H1 (cell line): ENCODE measurements at regions of chr16 and their contacts with region 1.

Region 1: DNA sequence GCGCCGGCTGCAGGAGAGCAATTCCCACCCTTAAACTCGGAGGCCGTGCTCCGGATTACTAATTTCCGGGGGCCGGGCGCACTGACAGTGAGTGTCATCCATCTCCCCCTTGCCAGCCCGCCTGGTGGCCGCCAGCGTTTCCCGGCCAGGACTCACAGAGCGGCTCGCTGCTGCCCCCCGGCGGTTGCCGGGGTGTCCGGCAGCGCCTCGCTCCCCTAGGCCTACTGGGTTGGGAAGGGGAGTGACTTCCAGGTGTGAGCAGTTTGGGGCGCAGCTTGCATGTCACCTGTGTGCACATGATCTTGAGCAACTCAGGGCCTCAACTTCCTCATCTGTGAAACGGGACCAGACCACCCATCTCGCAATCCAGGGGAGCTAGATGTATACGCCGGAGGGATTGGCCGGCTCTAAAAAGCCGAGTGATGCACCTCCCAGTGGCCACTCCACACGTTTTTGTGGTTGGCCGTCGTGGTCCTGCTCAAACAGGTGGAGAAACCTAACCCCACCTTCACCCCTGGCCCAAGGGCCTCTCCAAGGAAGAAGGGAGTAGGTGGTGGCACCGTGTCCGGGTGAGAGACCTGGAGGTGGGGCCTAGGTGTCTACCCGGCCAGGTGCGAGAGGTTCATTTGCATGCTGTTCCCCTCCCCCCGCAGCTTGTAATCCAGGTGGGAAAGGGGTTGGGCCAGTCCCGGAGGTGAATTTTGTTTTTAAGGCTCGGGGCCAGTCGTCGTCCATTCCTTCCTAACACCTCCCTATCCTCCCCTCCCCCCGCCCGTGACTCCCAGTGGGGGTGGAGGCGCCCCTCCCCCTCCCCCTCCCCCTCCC is 2.4 kb upstream of the GSE1 start:
- DNase-seq: peak; percentile 88 to 96
- H3K4me3 ChIP-seq: peak overlapping the region; percentile 29 to 92 (median 52); a peak in 6 of 8 replicates
- H3K27ac ChIP-seq: peak overlapping the region; percentile 70; the same call in 1 of the 2 replicates
- H3K4me1 ChIP-seq: peaks cover 10 to 46% (median 41%) of the 10 kb centered on the region in 4 experiments
- H3K27me3 ChIP-seq: peaks cover 0 to 9% (median 4%) of the 10 kb centered on the region in 4 experiments; a peak in 2 of 7 replicates
- CTCF ChIP-seq: peak in 2 of 3 experiments; percentile 90 to 99; a peak in 3 of 4 replicates
- EP300 ChIP-seq: peak in 1 of 2 experiments; percentile 83; a peak in 1 of 3 replicates
- POLR2A ChIP-seq: no peak
- RAD21 ChIP-seq: peak; percentile 97 to 98

Region 2: GRCh38 chr16:85461814-85462713 is 148.7 kb before region 1 on chr16:
- CTCF ChIA-PET with region 1: interaction called, 16 read pairs
- POLR2A ChIA-PET with region 1: interaction called, 3 read pairs
- DNase-seq: peak in 1 of 2 experiments; percentile 76
- H3K4me3 ChIP-seq: peak overlapping the region; percentile 4 to 57 (median 46)
- H3K27ac ChIP-seq: no peak overlapping the region
- H3K4me1 ChIP-seq: peaks cover 7 to 33% (median 25%) of the 10 kb centered on the region in 4 experiments
- H3K27me3 ChIP-seq: peaks cover 5 to 49% (median 36%) of the 10 kb centered on the region in 4 experiments; a peak in 6 of 7 replicates
- CTCF ChIP-seq: no peak
- EP300 ChIP-seq: no peak
- POLR2A ChIP-seq: no peak
- RAD21 ChIP-seq: no peak

Region 3: DNA sequence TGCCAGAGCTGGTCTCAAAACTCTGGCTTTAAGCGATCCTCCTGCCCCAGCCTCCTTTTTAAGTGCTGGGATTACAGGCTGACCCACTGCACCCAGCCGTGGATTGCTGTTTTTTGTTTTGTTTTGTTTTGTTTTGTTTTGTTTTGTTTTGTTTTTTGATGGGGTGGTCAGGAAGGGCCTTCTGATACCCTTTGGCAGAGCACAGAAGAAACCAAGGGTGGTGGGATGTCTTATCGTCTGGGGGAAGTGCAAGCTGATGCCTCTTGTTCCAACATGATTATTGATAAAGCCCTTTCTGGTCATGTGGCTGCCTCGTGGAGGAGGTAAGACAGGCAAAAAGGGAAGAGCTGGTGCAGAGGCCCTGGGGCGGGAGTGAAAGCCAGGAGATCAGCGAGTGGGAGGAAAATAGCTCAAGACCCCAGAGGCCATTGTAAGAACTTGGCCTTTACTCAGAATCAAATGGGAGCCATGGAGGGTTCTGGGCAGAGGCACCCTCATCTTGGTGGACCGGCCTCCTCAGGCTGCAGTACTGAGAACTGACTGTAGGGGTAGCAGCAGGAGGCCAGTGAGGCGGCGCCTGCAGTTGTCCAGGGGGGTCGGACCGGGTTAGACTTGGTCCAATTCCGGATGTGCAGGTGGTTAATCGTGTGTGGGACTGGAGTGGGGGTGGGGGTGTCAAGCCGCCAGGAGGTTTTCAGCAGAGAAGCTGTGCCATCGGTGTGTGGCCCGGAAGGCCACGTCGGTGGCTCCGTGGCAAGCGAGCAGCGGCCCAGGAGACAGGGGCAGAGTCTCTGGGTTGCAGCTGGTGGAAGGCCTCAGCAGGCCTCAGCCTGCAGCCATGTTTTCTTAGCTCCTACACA is 82.0 kb before region 1 on chr16:
- CTCF ChIA-PET with region 1: interaction called, 18 read pairs
- POLR2A ChIA-PET with region 1: interaction called, 4 read pairs
- DNase-seq: no peak
- H3K4me3 ChIP-seq: no peak overlapping the region
- H3K27ac ChIP-seq: no peak overlapping the region
- H3K4me1 ChIP-seq: peaks cover 3 to 24% (median 13%) of the 10 kb centered on the region in 4 experiments
- H3K27me3 ChIP-seq: no peaks in the 10 kb centered on the region
- CTCF ChIP-seq: peak; percentile 37 to 57 (median 47)
- EP300 ChIP-seq: no peak
- POLR2A ChIP-seq: no peak
- RAD21 ChIP-seq: no peak; a peak in 1 of 4 replicates

Region 4: GRCh38 chr16:85564277-85565051 is 46.3 kb before region 1 on chr16:
- CTCF ChIA-PET with region 1: interaction called, 30 read pairs
- POLR2A ChIA-PET with region 1: interaction called, 4 read pairs
- DNase-seq: no peak
- H3K4me3 ChIP-seq: no peak overlapping the region
- H3K27ac ChIP-seq: no peak overlapping the region
- H3K4me1 ChIP-seq: peaks cover 14 to 52% (median 27%) of the 10 kb centered on the region in 4 experiments
- H3K27me3 ChIP-seq: no peaks in the 10 kb centered on the region
- CTCF ChIP-seq: peak; percentile 53 to 70 (median 68)
- EP300 ChIP-seq: no peak
- POLR2A ChIP-seq: no peak
- RAD21 ChIP-seq: peak in 1 of 2 experiments; percentile 18; a peak in 1 of 4 replicates

Region 5: GRCh38 chr16:85592700-85593493 is 17.8 kb before region 1 on chr16:
- CTCF ChIA-PET with region 1: interaction called, 26 read pairs
- POLR2A ChIA-PET with region 1: interaction called, 3 read pairs
- DNase-seq: no peak
- H3K4me3 ChIP-seq: no peak overlapping the region
- H3K27ac ChIP-seq: no peak overlapping the region
- H3K4me1 ChIP-seq: peaks cover 5 to 25% (median 17%) of the 10 kb centered on the region in 4 experiments
- H3K27me3 ChIP-seq: 0 out of 7 replicates have a peak, but pooled peaks cover 0 to 3% (median 0%) of the 10 kb centered on the region in 4 experiments
- CTCF ChIP-seq: no peak
- EP300 ChIP-seq: no peak
- POLR2A ChIP-seq: no peak
- RAD21 ChIP-seq: no peak

Region 6: DNA sequence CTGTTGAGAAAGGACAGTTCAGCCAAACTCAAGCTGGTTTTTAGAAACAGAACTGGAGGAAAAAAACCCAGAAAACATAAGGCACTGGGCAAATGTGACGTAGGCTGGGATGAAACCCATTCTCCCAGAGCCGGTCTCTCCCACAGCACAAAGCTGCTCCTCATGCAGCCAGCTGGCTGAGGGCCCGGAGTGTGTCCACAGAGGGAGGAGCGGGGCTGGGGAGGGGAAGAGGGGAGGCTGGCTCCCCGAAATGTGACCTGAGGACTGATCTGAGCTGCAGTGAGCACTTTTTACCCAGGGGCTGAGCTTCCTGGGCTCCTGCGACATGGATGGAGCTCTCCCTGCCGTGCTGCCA is 920.4 kb after region 1 on chr16:
- CTCF ChIA-PET with region 1: no interaction called
- POLR2A ChIA-PET with region 1: no interaction called
- DNase-seq: no peak
- H3K4me3 ChIP-seq: no peak overlapping the region
- H3K27ac ChIP-seq: no peak overlapping the region
- H3K4me1 ChIP-seq: no peaks in the 10 kb centered on the region
- H3K27me3 ChIP-seq: no peaks in the 10 kb centered on the region
- CTCF ChIP-seq: no peak
- EP300 ChIP-seq: no peak
- POLR2A ChIP-seq: no peak
- RAD21 ChIP-seq: no peak